HCT116 (cell line): ENCODE measurements at regions of chr17 and their contacts with region 1.

Region 1: DNA sequence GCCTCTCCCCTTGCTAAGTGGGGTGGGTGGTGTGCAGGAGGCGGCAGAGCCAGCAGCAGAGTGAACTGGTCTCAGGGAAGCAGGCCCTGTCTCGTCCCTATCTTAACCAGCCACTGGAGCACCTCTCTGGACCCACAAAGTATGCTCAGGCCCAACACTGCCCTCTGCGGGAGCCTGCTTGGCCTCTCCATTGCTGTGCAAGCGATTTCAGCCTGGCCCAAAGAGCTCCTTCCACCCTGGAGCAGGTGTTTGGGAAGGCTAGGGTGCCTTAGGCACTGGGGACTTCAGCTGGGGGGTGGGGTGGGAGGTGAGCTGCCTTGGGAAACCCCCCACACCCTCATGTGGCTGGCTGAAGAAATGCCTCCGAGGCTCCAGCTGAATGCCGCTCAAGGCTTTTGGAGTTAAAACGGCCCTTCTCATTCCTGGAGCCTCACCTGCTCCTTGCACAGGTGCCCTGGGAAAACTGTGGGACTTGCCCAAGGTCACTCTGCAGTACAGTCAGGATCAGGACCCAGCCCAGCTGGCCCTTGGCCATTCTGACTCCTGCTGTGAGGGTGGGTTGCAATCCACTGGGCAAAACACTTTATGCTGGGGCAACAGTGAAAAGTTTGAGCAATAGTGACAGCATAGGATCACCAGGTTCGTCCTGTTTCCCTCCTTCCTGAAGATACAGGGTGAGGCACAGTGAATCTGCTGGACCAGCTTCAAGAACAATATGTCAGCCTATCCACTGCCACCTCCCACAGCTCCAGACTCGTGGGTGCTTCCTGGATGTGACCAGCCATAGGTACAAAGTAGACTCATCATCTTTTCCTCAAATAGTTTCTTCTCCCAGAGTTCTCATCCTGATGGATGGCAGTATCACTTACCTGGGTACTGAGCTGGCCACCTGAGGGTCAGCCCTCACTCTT is 5.9 kb upstream of the UBE2O start:
- DNase-seq: peak; percentile 57
- ATAC-seq: peak; percentile 95
- H3K4me3 ChIP-seq: no peak overlapping the region
- H3K27ac ChIP-seq: no peak overlapping the region
- H3K4me1 ChIP-seq: peaks cover 0 to 10% of the 10 kb centered on the region in 2 experiments; a peak in 1 of 4 replicates
- H3K27me3 ChIP-seq: no peaks in the 10 kb centered on the region
- CTCF ChIP-seq: peak; percentile 72 to 84 (median 83)
- POLR2A ChIP-seq: no peak
- RAD21 ChIP-seq: peak; percentile 86

Region 2: DNA sequence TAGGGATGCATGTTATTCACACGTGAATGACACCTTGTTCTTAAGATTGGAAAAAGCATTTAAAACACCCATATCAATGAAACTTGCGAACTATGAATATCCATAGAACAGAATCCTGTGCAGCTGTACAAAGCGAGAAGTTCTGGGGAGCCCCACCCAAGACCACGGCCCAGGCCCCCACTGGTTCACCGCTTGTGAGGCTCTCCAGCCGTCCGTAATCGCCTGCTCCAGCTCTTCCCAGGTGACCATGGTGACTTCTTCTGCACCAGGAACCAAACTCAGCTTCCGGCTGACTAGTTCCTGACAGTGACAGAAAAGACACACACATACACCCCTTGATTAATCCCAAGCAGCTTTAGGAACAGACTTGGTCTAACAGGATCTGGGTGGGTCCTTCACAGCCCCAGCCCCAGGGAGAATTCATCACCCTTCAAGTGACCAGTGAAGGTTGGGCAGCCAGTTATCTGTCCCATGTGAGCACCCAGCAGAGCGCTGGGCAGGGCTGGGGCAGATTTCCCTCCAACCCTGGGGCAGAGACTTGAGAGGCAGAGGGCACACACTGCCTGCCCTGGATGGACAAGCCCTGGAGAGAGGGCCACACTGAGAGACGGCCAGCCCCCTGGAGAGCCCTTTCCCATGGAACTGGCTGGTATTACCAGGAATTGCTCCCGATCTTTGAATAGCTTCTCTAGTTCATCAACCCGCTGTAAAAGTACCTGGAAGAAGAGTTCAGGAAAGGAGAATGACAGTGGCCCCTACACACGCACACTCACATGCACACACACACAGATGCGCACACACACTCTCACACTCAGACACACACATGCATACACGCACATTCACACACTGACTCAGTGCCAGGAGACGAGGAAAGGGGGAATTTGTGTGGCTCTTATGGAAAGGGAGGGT is 154.4 kb before region 1 on chr17:
- CTCF ChIA-PET with region 1: interaction called, 5 read pairs
- POLR2A ChIA-PET with region 1: no interaction called
- RAD21 ChIA-PET with region 1: no interaction called
- intact Hi-C with region 1: loop called (anchors 1 kb)
- DNase-seq: no peak
- ATAC-seq: no peak
- H3K4me3 ChIP-seq: no peak overlapping the region
- H3K27ac ChIP-seq: no peak overlapping the region
- H3K4me1 ChIP-seq: no peaks in the 10 kb centered on the region
- H3K27me3 ChIP-seq: no peaks in the 10 kb centered on the region
- CTCF ChIP-seq: no peak
- POLR2A ChIP-seq: no peak
- RAD21 ChIP-seq: no peak

Region 3: GRCh38 chr17:76397687-76398487 is 60.9 kb before region 1 on chr17:
- CTCF ChIA-PET with region 1: interaction called, 16 read pairs
- POLR2A ChIA-PET with region 1: no interaction called
- RAD21 ChIA-PET with region 1: interaction called, 5 to 7 read pairs
- intact Hi-C with region 1: no loop called
- DNase-seq: peak; percentile 68
- ATAC-seq: peak; percentile 91
- H3K4me3 ChIP-seq: no peak overlapping the region
- H3K27ac ChIP-seq: no peak overlapping the region
- H3K4me1 ChIP-seq: no peaks in the 10 kb centered on the region
- H3K27me3 ChIP-seq: no peaks in the 10 kb centered on the region
- CTCF ChIP-seq: peak; percentile 87 to 100 (median 99)
- POLR2A ChIP-seq: no peak
- RAD21 ChIP-seq: peak; percentile 90

Region 4: GRCh38 chr17:76414334-76415295 is 44.2 kb before region 1 on chr17:
- CTCF ChIA-PET with region 1: interaction called, 41 read pairs
- POLR2A ChIA-PET with region 1: no interaction called
- RAD21 ChIA-PET with region 1: no interaction called
- intact Hi-C with region 1: no loop called
- DNase-seq: no peak
- ATAC-seq: no peak
- H3K4me3 ChIP-seq: no peak overlapping the region
- H3K27ac ChIP-seq: no peak overlapping the region
- H3K4me1 ChIP-seq: no peaks in the 10 kb centered on the region; a peak in 1 of 4 replicates
- H3K27me3 ChIP-seq: no peaks in the 10 kb centered on the region
- CTCF ChIP-seq: no peak
- POLR2A ChIP-seq: no peak
- RAD21 ChIP-seq: no peak

Region 5: GRCh38 chr17:76440751-76441362 is 18.0 kb before region 1 on chr17:
- CTCF ChIA-PET with region 1: no interaction called
- POLR2A ChIA-PET with region 1: no interaction called
- RAD21 ChIA-PET with region 1: no interaction called
- intact Hi-C with region 1: no loop called
- DNase-seq: no peak
- ATAC-seq: no peak
- H3K4me3 ChIP-seq: no peak overlapping the region
- H3K27ac ChIP-seq: no peak overlapping the region
- H3K4me1 ChIP-seq: peaks cover 10 to 40% of the 10 kb centered on the region in 2 experiments
- H3K27me3 ChIP-seq: no peaks in the 10 kb centered on the region
- CTCF ChIP-seq: no peak
- POLR2A ChIP-seq: no peak
- RAD21 ChIP-seq: no peak

Region 6: DNA sequence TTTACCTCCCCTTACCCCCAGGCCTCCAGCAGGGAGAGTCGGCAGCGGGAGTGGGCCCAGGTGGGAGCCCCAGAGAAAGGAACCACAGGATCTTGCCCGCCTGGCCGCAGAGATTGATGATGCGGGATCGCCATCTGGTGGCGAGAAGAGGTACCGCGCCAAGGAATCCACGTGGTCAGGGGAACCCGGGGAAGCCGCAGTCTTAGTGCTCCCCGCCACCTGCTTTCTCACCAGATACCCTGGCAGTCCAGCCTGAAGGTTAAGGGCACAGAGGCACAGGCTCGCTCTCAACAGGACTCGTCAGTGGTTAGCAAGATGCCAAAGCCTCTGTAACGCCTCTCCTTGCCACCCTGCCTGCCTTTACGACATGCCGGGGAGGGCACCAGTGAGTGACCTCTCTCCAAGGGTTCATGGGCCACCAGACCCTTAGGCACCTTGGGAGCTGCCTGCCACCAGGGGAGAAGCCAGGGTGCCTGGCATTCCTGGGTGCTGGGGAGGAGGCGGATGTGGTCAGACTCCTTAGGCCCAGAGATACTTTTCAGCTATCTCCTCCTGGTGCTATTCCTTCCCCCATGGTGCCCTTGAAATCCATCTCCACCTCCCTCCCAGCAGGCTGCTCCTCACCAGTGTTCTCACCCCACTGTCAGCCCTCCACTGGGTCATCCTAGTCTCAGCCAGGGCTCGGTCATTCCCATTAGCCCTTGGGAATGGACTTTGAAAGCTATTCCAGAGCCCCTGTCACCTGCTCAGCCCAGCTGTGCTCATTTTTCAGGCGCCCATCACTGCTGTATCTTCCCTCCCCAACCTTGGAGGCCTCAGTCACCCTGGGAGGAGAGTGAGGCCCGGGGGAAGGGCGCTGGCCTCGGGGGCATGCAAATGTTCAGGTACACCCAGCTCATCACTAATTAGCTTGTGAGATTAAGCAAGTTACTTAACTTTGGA is 47.8 kb after region 1 on chr17:
- CTCF ChIA-PET with region 1: interaction called, 100 read pairs
- POLR2A ChIA-PET with region 1: interaction called, 5 read pairs
- RAD21 ChIA-PET with region 1: interaction called, 5 to 6 read pairs
- intact Hi-C with region 1: loop called (anchors 1 kb)
- DNase-seq: peak; percentile 60
- ATAC-seq: peak; percentile 84
- H3K4me3 ChIP-seq: no peak overlapping the region
- H3K27ac ChIP-seq: no peak overlapping the region; the same call in 1 of the 2 replicates
- H3K4me1 ChIP-seq: peaks cover 8 to 27% of the 10 kb centered on the region in 2 experiments
- H3K27me3 ChIP-seq: no peaks in the 10 kb centered on the region
- CTCF ChIP-seq: peak; percentile 94 to 99 (median 98)
- POLR2A ChIP-seq: no peak
- RAD21 ChIP-seq: peak; percentile 100

Region 7: DNA sequence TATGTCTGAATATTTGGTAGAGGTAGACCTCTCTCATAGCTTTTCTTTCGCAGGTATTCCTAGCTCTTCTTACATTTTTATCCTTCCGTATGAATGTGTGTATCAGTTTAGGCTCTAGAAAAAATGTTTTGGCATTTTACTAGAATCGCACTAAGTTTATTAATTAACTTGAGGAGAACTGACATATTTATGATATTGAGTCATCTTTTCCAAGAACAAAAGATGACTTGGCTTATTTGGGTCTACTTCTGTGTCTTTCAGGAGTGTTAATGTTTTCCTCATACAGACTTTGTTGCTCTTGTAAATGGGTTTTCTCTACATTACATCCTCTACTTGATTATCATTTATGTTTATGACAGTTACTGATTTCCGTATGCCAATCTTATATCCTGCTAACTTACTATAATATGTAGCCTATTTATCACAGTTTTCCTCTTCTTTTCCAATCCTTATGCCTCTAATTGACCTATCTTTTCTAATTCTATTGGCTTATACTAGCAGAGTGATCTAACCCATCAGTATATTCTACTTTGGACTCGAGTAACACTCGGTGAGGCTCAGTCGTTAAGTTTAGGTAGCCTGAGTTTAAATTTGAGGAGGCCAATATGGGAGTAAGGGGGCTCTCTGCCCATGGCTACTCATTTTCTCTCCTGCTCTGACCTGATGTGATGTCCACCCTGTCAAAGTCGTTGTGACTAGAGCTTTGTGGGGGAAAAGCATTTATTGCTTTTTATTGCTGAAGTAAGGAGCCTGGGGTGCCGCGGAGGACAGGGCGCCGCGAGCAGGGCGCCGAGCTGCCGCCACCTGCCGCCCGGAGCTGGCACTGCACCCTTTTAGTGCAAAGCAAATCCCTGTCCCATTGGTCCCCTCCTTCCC is 164.7 kb after region 1 on chr17:
- CTCF ChIA-PET with region 1: interaction called, 5 read pairs
- POLR2A ChIA-PET with region 1: no interaction called
- RAD21 ChIA-PET with region 1: no interaction called
- intact Hi-C with region 1: loop called (anchors 5 kb)
- DNase-seq: peak; percentile 63
- ATAC-seq: peak; percentile 99
- H3K4me3 ChIP-seq: peak overlapping the region; percentile 38 to 47
- H3K27ac ChIP-seq: peak overlapping the region; percentile 1; the same call in 1 of the 2 replicates
- H3K4me1 ChIP-seq: peaks cover 9 to 12% of the 10 kb centered on the region in 2 experiments
- H3K27me3 ChIP-seq: no peaks in the 10 kb centered on the region
- CTCF ChIP-seq: peak; percentile 93 to 99 (median 97)
- POLR2A ChIP-seq: no peak
- RAD21 ChIP-seq: peak; percentile 95

Region 8: GRCh38 chr17:76635659-76636360 is 177.0 kb after region 1 on chr17:
- CTCF ChIA-PET with region 1: no interaction called
- POLR2A ChIA-PET with region 1: no interaction called
- RAD21 ChIA-PET with region 1: no interaction called
- intact Hi-C with region 1: no loop called
- DNase-seq: no peak
- ATAC-seq: no peak
- H3K4me3 ChIP-seq: no peak overlapping the region
- H3K27ac ChIP-seq: no peak overlapping the region
- H3K4me1 ChIP-seq: peaks cover 0 to under 1% of the 10 kb centered on the region in 2 experiments; a peak in 1 of 4 replicates
- H3K27me3 ChIP-seq: no peaks in the 10 kb centered on the region
- CTCF ChIP-seq: no peak
- POLR2A ChIP-seq: no peak
- RAD21 ChIP-seq: no peak

Region 9: GRCh38 chr17:77164483-77165091 is 705.8 kb after region 1 on chr17:
- CTCF ChIA-PET with region 1: no interaction called
- POLR2A ChIA-PET with region 1: no interaction called
- RAD21 ChIA-PET with region 1: no interaction called
- intact Hi-C with region 1: no loop called
- DNase-seq: no peak
- ATAC-seq: no peak
- H3K4me3 ChIP-seq: no peak overlapping the region
- H3K27ac ChIP-seq: no peak overlapping the region
- H3K4me1 ChIP-seq: no peaks in the 10 kb centered on the region
- H3K27me3 ChIP-seq: no peaks in the 10 kb centered on the region
- CTCF ChIP-seq: no peak
- POLR2A ChIP-seq: no peak
- RAD21 ChIP-seq: no peak